ENCODE measurements at regions of chr1 and their contacts with region 1.

Region 1: GRCh38 chr1:89545264-89546038 is 20.8 kb downstream of the LRRC8B start:
- DNase-seq: peak; percentile 39
- H3K4me3 Mint-ChIP-seq: peak overlapping the region; percentile 12
- H3K27ac Mint-ChIP-seq: peak overlapping the region; percentile 90
- H3K4me1 Mint-ChIP-seq: peaks cover 85% of the 10 kb centered on the region
- H3K27me3 Mint-ChIP-seq: peaks cover 2% of the 10 kb centered on the region

Region 2: GRCh38 chr1:89407360-89407759 is 138.1 kb before region 1 on chr1:
- intact Hi-C with region 1: no loop called
- DNase-seq: no peak
- H3K4me3 Mint-ChIP-seq: peak overlapping the region; percentile 59
- H3K27ac Mint-ChIP-seq: no peak overlapping the region
- H3K4me1 Mint-ChIP-seq: peaks cover 20% of the 10 kb centered on the region
- H3K27me3 Mint-ChIP-seq: peaks cover 10% of the 10 kb centered on the region

Region 3: DNA sequence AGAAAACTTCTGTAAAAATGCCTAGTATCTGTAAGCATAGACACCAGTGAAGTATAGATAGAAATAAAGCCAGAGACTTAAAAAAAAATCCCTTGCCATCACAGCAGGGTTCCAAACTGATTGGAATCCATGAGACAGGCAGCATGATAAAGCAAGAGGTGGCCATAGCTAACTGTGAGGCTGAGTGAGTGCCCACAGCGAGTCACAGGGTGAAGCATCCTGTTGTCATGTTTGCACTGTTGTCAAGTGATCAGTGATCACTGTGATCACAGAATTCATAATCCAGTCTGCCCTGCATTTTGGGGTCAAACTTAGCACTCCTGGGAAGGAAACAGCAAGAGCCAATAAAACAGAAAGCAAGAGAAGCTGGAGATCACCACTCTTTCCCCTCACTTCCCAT is 12.5 kb after region 1 on chr1:
- intact Hi-C with region 1: loop called (anchors 1 kb)
- DNase-seq: no peak
- H3K4me3 Mint-ChIP-seq: no peak overlapping the region
- H3K27ac Mint-ChIP-seq: peak overlapping the region; percentile 71
- H3K4me1 Mint-ChIP-seq: peaks cover 54% of the 10 kb centered on the region
- H3K27me3 Mint-ChIP-seq: no peaks in the 10 kb centered on the region

Region 4: DNA sequence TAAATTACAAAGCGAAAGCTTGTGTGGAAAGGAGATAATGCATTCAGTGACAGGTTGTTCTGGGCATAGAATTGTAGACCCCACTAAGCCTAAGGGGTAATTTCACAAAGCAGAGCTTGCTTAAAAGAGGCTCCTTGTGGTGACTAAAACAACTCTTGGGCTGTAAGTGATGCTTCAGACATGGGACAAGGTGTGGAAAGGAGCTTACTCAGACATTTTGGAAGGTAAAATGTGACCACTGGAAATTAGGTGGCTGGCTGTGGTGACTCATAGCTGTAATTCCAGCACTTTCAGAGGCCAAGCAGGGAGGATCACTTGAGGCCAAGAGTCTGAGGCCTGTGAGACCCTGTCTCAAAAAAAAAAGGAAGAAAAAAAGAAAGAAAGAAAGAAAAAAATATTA is 36.4 kb after region 1 on chr1:
- intact Hi-C with region 1: no loop called
- DNase-seq: no peak
- H3K4me3 Mint-ChIP-seq: no peak overlapping the region
- H3K27ac Mint-ChIP-seq: peak overlapping the region; percentile 91
- H3K4me1 Mint-ChIP-seq: peaks cover 53% of the 10 kb centered on the region
- H3K27me3 Mint-ChIP-seq: no peaks in the 10 kb centered on the region

Region 5: GRCh38 chr1:89736937-89737733 is 191.7 kb after region 1 on chr1:
- intact Hi-C with region 1: no loop called
- DNase-seq: no peak
- H3K4me3 Mint-ChIP-seq: no peak overlapping the region
- H3K27ac Mint-ChIP-seq: no peak overlapping the region
- H3K4me1 Mint-ChIP-seq: peaks cover 83% of the 10 kb centered on the region
- H3K27me3 Mint-ChIP-seq: no peaks in the 10 kb centered on the region

Measured in activated T-helper 1 cell treated with anti-CD3 and anti-CD28 coated beads, Interleukin-12 subunit alpha, Interleukin-12 subunit beta, Interleukin-2, Interleukin-4 antibody, amounts not matched to agents 30 ng/mL and 10 ng/mL and 1 ng/mL, durations not matched to agents 14 hours and 24 hours and 36 hours (primary cell).